ENCODE measurements at regions of chr14 and their contacts with region 1.

Region 1: GRCh38 chr14:95442633-95443021 is 73.8 kb downstream of the SYNE3 start:
- DNase-seq: peak; percentile 83
- H3K4me3 Mint-ChIP-seq: no peak overlapping the region
- H3K27ac Mint-ChIP-seq: no peak overlapping the region
- H3K4me1 Mint-ChIP-seq: no peaks in the 10 kb centered on the region
- H3K27me3 Mint-ChIP-seq: no peaks in the 10 kb centered on the region
- CTCF ChIP-seq: peak; percentile 85

Region 2: GRCh38 chr14:95431199-95432143 is 11.2 kb before region 1 on chr14:
- CTCF ChIA-PET with region 1: interaction called, 14 read pairs
- POLR2A ChIA-PET with region 1: interaction called, 4 read pairs
- intact Hi-C with region 1: no loop called
- DNase-seq: peak; percentile 48
- H3K4me3 Mint-ChIP-seq: no peak overlapping the region
- H3K27ac Mint-ChIP-seq: peak overlapping the region; percentile 63
- H3K4me1 Mint-ChIP-seq: peaks cover 6% of the 10 kb centered on the region
- H3K27me3 Mint-ChIP-seq: no peaks in the 10 kb centered on the region
- CTCF ChIP-seq: peak; percentile 46

Region 3: DNA sequence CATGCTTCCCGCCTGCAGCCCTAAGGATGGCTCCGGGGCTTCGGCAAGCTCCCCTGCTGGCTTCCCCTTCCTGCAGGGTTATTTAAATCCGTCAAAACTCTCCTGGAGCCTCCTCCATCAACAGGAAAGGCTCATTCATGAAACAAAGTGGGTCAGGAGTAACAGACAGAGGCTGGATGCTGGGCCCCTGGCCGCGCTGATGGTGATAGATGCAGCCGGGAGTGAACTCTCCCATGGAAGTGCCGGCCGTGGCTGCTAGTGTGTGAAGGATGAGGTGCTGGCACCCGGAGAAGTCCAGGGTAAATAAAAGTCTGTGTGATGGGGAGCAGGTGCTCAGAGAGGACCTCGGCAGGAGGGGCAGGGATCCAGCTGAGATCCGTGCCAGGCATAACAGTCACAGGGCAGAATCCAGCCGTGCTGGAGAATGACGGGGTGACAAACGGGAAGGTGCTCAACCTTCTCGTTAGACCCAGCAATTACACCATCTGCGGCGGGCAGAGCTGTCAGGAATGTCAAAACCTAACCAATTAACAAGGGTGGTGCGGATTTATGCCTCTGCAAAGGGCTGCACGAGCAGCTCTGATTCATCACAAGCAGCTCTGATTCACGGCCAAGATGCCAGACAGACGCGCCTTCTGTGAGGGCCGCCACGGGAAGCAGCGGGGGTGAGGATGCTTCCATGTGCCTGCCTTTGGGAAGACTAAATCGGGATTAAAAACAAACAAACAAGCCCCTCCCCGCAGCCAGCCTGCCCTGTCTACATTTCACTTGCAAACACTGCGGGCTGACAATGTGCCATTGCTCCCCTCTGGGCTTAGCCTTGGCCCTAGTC is 18.2 kb after region 1 on chr14:
- CTCF ChIA-PET with region 1: interaction called, 42 read pairs
- POLR2A ChIA-PET with region 1: interaction called, 3 read pairs
- intact Hi-C with region 1: no loop called
- DNase-seq: peak; percentile 89
- H3K4me3 Mint-ChIP-seq: no peak overlapping the region
- H3K27ac Mint-ChIP-seq: peak overlapping the region; percentile 2
- H3K4me1 Mint-ChIP-seq: peaks cover 18% of the 10 kb centered on the region
- H3K27me3 Mint-ChIP-seq: no peaks in the 10 kb centered on the region
- CTCF ChIP-seq: no peak

Region 4: DNA sequence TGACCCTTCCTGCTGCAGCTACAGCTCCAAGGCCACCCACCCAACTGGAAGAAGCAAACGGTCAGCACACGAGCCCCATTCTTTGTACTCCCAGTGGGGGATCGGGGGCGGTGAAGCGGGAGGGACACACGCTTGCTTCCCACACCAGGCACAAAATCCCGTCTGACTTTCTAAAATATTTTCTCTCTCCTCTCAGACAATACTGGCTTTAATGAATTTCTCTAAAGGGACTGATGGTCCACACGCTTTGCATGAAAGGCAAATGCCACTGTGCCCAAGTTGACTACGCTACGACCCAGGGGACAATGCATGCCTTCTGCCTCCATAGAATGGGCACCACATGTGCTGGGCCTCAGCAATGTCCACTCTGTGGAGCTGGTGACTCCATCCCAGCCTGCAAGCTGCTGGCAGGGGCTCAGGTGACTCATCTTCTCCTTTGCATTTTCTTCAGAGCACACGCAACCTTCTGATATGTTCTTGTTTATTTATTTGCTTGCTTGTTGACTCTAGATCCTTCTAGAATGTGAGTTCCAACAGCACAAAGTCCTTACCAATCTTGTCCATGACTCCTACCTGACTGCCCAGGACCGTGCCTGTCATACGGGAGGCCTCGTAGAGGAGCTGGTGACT is 58.3 kb after region 1 on chr14:
- CTCF ChIA-PET with region 1: interaction called, 11 read pairs
- POLR2A ChIA-PET with region 1: no interaction called
- intact Hi-C with region 1: no loop called
- DNase-seq: peak; percentile 79
- H3K4me3 Mint-ChIP-seq: no peak overlapping the region
- H3K27ac Mint-ChIP-seq: peak overlapping the region; percentile 11
- H3K4me1 Mint-ChIP-seq: peaks cover 18% of the 10 kb centered on the region
- H3K27me3 Mint-ChIP-seq: no peaks in the 10 kb centered on the region
- CTCF ChIP-seq: no peak

Region 5: DNA sequence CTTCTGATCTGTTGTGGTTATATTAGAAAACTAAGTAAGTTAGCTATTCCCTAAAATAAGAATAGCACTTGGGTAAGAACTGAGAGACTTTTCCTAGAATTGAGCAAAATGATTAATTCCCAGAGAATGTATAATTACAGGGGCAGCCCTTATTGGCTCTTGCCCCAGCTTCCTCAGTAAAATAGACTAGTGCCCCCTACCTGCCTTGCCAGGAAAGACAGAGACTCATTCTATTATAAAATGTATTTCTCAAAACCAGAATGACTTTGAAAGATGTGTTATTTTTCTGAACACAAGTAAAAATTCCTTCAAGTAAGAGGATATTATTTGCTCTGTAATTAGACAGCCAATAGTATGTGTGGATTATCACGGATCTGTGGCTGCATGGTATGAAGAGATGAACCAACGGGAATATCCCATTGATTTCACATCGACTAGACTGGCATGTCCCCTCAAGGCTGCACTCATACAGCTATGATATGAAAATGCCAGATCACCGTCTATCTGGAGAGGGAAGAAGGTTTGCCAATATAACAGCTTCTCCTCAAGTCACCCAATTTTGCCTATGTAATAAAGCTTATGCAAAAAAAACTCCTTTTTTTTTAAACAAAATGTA is 84.9 kb after region 1 on chr14:
- CTCF ChIA-PET with region 1: interaction called, 162 read pairs
- POLR2A ChIA-PET with region 1: interaction called, 19 read pairs
- intact Hi-C with region 1: loop called (anchors 1 kb)
- DNase-seq: peak; percentile 67
- H3K4me3 Mint-ChIP-seq: no peak overlapping the region
- H3K27ac Mint-ChIP-seq: no peak overlapping the region
- H3K4me1 Mint-ChIP-seq: peaks cover 62% of the 10 kb centered on the region
- H3K27me3 Mint-ChIP-seq: no peaks in the 10 kb centered on the region
- CTCF ChIP-seq: peak; percentile 72

Region 6: DNA sequence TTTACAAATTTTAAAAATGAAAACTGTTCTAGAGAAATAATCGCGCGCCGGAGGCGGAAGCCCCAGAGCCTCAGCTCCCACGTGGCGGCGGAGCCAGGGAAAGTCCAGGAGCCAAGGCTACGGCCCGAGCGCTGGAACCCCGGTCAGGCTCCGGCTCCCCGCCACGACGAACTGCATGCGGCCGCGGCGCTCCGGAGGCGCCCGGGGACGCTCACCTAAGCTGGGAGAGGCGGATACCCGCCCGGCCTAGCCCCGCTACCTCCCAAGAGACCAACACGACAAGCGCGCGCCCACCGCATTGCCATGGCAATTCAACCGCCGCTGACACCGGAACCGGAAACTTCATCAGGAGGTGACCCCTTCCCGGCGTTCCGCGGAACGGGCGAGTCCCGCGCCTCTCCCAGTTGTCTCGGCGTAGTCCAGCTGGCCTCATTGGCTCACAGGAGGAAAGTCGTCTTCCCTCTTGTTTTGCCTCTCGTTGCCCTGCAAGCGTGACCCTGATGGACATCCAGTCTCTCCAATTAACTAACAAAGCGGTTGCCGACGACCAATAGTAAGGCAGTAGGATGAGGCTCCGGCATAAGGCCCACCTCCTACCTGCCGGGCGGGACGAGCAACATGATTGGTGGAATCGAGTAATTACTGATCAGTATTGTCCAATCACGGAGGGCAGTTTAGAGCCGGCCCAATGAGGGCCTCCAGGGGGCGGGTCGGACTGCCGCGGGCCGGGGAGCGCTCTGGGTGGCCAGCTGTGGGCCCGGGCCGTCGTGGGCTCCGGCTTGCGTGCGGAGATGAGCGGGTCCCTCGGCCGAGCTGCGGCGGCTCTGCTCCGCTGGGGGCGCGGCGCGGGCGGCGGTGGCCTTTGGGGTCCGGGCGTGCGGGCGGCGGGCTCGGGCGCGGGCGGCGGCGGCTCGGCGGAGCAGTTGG is 91.9 kb after region 1 on chr14 and contains the start of gene GLRX5:
- CTCF ChIA-PET with region 1: interaction called, 162 read pairs
- POLR2A ChIA-PET with region 1: interaction called, 9 read pairs
- intact Hi-C with region 1: loop called (anchors 2 kb)
- DNase-seq: peak; percentile 100
- H3K4me3 Mint-ChIP-seq: peak within 1 kb of the TSS; percentile 87
- H3K27ac Mint-ChIP-seq: peak within 1 kb of the TSS; percentile 93
- H3K4me1 Mint-ChIP-seq: peaks cover 41% of the 10 kb centered on the region
- H3K27me3 Mint-ChIP-seq: no peaks in the 10 kb centered on the region
- CTCF ChIP-seq: no peak
- total RNA-seq, gene GLRX5: 32.2 and 39.8 TPM in 2 replicates

Measured in MCF 10A (cell line).